OCI-LY7 (cell line): ENCODE measurements at regions of chr12 and their contacts with region 1.

Region 1: DNA sequence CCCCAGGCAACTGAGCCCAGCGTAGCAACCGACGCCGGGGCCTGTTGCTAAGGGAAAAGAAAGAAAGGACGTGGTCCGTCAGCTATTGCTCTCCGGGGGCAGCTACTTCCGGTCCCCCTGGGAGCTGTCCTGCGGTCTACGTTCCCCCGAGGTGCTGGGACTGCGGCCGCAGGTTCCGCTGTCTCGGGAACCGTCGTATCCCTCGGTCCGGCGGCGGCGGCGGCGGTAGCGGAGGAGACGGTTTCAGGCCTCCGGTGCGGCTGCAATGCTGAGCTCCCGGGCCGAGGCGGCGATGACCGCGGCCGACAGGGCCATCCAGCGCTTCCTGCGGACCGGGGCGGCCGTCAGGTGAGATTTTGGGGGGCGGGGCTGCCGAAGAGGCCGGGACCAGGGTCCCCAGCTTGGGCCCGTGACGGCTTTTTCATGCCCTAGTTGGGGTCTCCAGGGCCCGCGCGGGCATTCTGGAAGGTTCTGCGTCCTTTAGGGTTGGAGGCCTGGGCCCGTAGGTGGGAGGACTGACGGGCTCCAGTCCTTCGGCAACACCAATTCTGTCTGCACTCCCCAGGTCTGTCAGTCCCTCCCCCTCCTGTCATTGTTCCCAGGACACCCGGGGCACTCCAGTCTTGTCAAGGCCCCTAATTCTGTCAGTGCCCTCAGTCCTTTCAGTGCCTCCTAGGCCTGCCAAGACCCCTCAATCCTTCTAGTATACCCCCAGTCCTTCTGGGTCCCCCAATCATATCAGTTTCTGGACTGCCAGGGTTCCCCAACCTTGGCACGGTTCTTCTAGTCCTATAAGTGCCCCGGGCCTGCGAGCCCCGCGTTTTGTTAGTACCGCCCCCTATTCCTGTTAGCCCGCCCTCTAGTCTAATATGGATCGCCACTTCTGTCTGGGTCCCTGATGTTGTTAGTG is at the start of gene USP30:
- DNase-seq: peak; percentile 92
- H3K4me3 ChIP-seq: peak within 1 kb of the TSS; percentile 81
- H3K27ac ChIP-seq: peak within 1 kb of the TSS; percentile 85
- H3K4me1 ChIP-seq: peaks cover 42% of the 10 kb centered on the region
- CTCF ChIP-seq: no peak
- total RNA-seq, gene USP30: 15.7 and 17.1 TPM in 2 replicates

Region 2: DNA sequence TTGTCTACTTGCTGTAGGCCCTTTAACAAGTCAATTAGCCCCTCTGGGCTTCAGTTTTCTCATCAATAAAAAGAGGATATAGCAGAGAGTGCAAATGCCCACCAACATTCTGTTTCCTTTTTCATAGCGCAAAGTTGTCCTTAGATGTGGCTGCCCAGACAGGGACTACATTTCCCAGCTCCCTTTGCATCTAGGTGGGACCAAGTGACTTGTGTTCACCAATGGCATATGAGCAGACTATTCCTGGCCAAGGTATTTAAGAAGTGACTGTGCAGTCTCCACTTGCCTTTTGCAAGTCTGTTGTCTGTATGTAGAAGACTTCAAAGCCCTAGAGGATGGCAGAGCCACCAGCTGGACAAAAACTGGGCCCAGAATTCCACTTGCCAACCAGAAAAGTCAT is 113.1 kb before region 1 on chr12:
- CTCF ChIA-PET with region 1: no interaction called
- POLR2A ChIA-PET with region 1: no interaction called
- intact Hi-C with region 1: no loop called
- DNase-seq: peak; percentile 76
- H3K4me3 ChIP-seq: no peak overlapping the region
- H3K27ac ChIP-seq: no peak overlapping the region
- H3K4me1 ChIP-seq: peaks cover 21% of the 10 kb centered on the region
- CTCF ChIP-seq: no peak

Region 3: GRCh38 chr12:109065154-109065852 is 12.6 kb after region 1 on chr12:
- CTCF ChIA-PET with region 1: no interaction called
- POLR2A ChIA-PET with region 1: interaction called, 9 read pairs
- intact Hi-C with region 1: loop called (anchors 1 kb)
- DNase-seq: no peak
- H3K4me3 ChIP-seq: no peak overlapping the region
- H3K27ac ChIP-seq: peak overlapping the region; percentile 94
- H3K4me1 ChIP-seq: peaks cover 63% of the 10 kb centered on the region
- CTCF ChIP-seq: no peak